ENCODE measurements at regions of chr11 and their contacts with region 1.

Region 1: DNA sequence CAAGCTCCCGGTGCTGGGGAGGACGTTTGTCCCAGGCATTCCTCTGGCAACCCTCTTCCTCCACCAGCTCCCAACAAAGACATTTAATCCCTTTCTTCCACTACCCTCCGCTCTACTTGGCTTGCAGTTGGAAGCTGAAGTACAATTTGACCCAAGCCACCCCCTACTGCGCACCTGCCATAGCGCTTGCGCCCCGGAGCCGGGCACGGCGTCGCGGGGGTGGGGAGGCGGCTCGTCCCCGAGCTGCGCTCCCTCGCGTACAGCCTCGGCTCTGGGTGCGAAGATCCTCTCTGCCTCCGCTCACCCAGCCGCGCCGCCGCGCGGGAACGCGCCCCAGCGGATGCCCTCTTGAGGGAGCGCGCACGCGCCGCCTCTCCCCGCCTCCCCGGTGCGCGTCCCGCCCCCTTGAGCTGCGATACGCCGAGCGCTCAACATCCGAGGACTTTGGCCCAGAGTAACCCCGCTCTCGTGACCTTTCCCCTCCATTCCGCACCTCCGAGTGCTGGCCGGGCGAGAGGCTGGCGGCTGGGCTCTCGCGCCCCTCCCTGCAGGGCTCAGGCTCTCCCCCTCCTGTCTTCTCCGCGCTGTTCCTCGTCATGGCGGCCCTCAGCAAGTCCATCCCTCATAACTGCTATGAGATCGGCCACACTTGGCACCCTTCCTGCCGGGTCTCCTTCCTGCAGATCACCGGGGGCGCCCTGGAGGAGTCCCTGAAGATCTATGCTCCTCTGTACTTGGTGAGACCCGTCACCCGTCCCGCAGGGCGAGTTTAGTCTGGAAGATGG is at the start of gene TMEM135:
- DNase-seq: peak; percentile 97
- H3K4me3 ChIP-seq: peak within 1 kb of the TSS; percentile 63 to 85 (median 84)
- H3K27ac ChIP-seq: peak within 1 kb of the TSS; percentile 86 to 89 (median 88)
- H3K4me1 ChIP-seq: peaks cover 0 to 35% (median 13%) of the 10 kb centered on the region in 4 donors
- H3K27me3 ChIP-seq: no peaks in the 10 kb centered on the region
- CTCF ChIP-seq: no peak
- EP300 ChIP-seq: no peak
- POLR2A ChIP-seq: peak; percentile 41 to 49
- total RNA-seq, gene TMEM135: 20.0 to 36.2 (median 28.7) TPM

Region 2: DNA sequence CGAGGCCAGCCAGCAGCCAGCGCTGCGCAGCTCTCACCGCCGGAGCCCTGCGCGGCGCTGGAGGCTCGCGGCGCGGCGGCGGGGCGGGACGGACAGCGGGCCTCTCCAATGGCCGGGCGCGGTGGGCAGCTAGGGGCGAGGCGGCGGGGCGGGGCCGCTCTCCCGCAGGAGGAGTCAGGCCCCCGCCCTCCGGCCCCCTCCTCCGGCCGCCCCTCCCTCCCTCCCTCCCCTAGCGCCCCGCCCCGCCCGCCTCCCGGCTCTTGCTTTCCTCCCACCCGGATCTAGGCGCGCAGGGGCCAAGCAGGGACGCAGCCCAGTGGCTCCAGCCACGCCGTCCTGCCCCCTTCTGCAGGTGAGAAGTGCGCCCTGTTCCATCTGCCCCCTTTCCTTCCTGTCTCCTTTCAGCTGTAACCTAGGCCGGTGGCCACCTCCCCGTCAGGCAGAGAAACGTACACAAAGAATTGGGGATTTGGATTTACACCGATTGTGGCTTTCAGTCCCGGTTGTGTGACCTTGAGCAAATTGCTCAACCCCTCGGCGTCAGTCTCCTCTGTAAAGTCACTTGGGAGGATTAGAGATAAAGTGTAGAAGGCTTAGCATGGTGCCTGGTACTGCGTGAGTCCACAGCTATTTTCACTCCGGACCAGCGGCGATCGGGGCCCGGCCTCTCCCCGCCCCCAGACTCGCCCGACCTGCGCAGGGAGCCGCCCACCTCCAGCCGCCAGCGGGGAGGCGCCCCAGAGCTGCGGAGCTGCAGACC is 82.1 kb before region 1 on chr11 and contains the start of gene FZD4:
- intact Hi-C with region 1: loop called (anchors 2 kb)
- DNase-seq: peak; percentile 95
- H3K4me3 ChIP-seq: peak within 1 kb of the TSS; percentile 75 to 100 (median 95)
- H3K27ac ChIP-seq: peak within 1 kb of the TSS; percentile 92 to 98 (median 97)
- H3K4me1 ChIP-seq: peaks cover 0 to 55% (median 40%) of the 10 kb centered on the region in 4 donors
- H3K27me3 ChIP-seq: no peaks in the 10 kb centered on the region
- CTCF ChIP-seq: no peak
- EP300 ChIP-seq: no peak
- POLR2A ChIP-seq: no peak
- total RNA-seq, gene FZD4: 22.9 to 45.7 (median 35.7) TPM

Region 3: GRCh38 chr11:86999859-87000753 is 37.5 kb before region 1 on chr11:
- intact Hi-C with region 1: loop called (anchors 5 kb)
- DNase-seq: no peak
- H3K4me3 ChIP-seq: no peak overlapping the region
- H3K27ac ChIP-seq: no peak overlapping the region
- H3K4me1 ChIP-seq: no peaks in the 10 kb centered on the region
- H3K27me3 ChIP-seq: no peaks in the 10 kb centered on the region
- CTCF ChIP-seq: no peak
- EP300 ChIP-seq: no peak
- POLR2A ChIP-seq: no peak

Region 4: DNA sequence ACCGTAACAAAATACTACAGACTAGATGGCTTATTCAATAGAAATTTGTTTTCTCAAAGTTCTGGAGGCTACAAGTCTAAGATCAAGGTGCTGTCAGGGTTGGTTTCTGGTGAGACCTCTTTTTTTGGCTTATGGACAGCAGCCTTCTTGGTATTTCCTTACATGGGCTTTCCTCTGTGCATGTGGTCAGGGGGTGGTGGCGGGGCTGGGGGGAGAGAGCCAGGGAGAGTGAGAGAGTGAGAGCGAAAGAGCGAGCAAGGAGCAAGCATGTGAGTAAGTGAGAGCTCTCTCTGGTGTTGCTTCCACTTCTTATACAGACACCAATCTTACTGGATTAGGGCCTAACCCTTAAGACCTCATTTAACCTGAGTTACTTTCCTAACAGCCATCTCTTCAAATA is 181.6 kb after region 1 on chr11:
- intact Hi-C with region 1: no loop called
- DNase-seq: no peak
- H3K4me3 ChIP-seq: no peak overlapping the region
- H3K27ac ChIP-seq: no peak overlapping the region
- H3K4me1 ChIP-seq: peaks cover 0 to 21% (median 6%) of the 10 kb centered on the region in 4 donors
- H3K27me3 ChIP-seq: no peaks in the 10 kb centered on the region
- CTCF ChIP-seq: no peak
- EP300 ChIP-seq: no peak
- POLR2A ChIP-seq: no peak

Region 5: DNA sequence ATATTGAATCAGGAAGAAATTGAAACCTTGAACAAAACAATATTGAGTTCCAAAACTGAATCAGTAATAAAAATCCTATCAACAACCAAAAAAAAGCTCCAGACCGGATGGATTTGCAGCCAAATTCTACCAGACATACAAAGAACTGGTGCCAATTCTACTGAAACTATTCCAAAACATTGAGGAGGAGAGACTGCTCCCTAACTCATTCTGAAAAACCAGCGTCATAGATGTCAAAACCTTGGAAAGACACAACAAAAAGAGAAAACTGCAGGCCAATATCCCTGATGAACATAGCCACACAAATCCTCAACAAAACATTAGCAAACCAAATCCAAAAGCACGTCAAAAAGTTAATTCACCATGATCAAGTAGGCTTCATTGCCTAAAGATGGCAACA is 353.9 kb after region 1 on chr11:
- intact Hi-C with region 1: no loop called
- DNase-seq: no peak
- H3K4me3 ChIP-seq: no peak overlapping the region
- H3K27ac ChIP-seq: no peak overlapping the region
- H3K4me1 ChIP-seq: no peaks in the 10 kb centered on the region
- H3K27me3 ChIP-seq: no peaks in the 10 kb centered on the region
- CTCF ChIP-seq: no peak
- EP300 ChIP-seq: no peak
- POLR2A ChIP-seq: no peak